Mucosa of descending colon (tissue), 3 donors: ENCODE measurements at regions of chr11 and their contacts with region 1.

Region 1: GRCh38 chr11:86456052-86456939 is 81.6 kb downstream of the CCDC81 start:
- DNase-seq: peak; percentile 67 to 97 (median 82)
- ATAC-seq: peak; percentile 85
- H3K4me3 ChIP-seq: no peak overlapping the region
- H3K4me1 ChIP-seq: no peaks in the 10 kb centered on the region
- CTCF ChIP-seq: peak; percentile 72

Region 2: DNA sequence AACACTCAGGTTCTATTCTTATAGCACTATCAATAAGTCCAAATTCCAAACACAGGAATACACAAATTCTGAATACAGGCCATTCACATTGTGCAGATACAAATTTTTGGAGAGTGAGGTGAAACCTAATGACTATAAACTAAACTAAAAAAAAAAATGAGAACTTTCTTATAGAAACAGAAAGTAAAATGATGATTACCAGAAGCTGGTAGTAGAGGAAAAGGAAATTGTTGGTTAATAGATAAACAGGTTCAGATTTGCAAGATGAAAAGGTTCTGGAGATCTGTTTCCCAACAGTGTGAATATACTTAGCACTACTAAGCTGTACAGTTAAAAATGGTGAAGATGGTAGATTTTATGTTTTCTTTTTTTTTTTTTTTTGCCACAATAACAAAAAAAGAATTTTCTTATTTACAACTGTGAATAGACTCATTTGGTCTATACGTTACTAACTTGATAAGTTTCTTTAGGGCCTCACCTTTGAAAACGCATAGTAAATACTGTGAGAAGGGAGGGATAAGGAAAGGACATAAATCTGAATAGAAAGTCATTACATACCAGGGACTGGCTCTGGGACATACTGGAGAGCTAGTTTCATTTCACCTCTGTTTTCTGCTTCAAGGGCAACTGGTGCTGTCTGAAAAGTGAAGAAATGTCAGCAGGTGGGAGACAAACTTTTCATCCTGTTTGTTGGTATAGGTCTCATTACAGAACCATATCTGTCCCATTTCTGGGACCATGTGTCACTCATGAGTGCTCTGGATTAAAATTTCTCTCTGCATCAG is 756.1 kb before region 1 on chr11:
- intact Hi-C with region 1: no loop called
- DNase-seq: no peak
- ATAC-seq: peak; percentile 38
- H3K4me3 ChIP-seq: no peak overlapping the region
- H3K4me1 ChIP-seq: no peaks in the 10 kb centered on the region
- CTCF ChIP-seq: no peak

Region 3: GRCh38 chr11:86162239-86162638 is 294.1 kb before region 1 on chr11:
- intact Hi-C with region 1: no loop called
- DNase-seq: peak in 1 of 3 donors; percentile 38
- ATAC-seq: peak; percentile 68
- H3K4me3 ChIP-seq: no peak overlapping the region
- H3K4me1 ChIP-seq: no peaks in the 10 kb centered on the region
- CTCF ChIP-seq: no peak

Region 4: DNA sequence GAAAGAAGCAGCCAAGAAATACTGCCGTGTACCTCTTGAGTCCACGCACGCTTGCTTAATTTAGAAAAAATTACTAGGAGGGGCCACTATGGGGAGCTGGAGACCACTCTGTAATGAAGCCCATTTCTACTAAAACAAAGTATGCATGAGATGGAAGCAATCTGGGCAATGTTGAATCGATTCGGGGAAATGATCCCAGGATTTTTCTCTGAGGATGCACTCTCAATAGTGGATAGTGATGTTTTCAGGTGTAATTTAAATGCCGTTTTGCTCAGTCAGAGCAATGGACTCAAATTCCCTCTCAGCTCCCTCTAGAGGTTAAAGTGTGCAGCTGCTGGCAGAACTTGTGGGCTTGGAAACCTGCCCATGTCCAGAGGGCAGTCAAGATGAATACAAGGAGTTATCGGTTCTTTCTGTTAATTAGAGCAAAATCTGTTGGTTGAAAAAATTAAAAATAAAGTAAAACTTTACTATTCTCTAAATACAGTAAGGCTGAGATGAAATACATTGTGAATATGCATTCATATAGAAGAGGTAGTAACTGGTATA is 152.0 kb after region 1 on chr11:
- intact Hi-C with region 1: loop called in 1 of 2 experiments (anchors 10 kb)
- DNase-seq: peak in 2 of 3 donors; percentile 76 to 79
- ATAC-seq: peak; percentile 95
- H3K4me3 ChIP-seq: no peak overlapping the region
- H3K4me1 ChIP-seq: no peaks in the 10 kb centered on the region
- CTCF ChIP-seq: peak; percentile 83